Caco-2 (cell line): ENCODE measurements at regions of chr2 and their contacts with region 1.

Region 1: GRCh38 chr2:43484323-43484930 is 111.4 kb downstream of the THADA start:
- DNase-seq: peak in 1 of 2 experiments; percentile 57
- H3K4me3 ChIP-seq: no peak overlapping the region
- H3K4me3 Mint-ChIP-seq: no peak overlapping the region
- H3K27ac Mint-ChIP-seq: no peak overlapping the region
- H3K4me1 ChIP-seq: peaks cover 14% of the 10 kb centered on the region
- H3K4me1 Mint-ChIP-seq: peaks cover 34% of the 10 kb centered on the region
- H3K27me3 ChIP-seq: no peaks in the 10 kb centered on the region
- H3K27me3 Mint-ChIP-seq: no peaks in the 10 kb centered on the region
- CTCF ChIP-seq: peak; percentile 28 to 80

Region 2: DNA sequence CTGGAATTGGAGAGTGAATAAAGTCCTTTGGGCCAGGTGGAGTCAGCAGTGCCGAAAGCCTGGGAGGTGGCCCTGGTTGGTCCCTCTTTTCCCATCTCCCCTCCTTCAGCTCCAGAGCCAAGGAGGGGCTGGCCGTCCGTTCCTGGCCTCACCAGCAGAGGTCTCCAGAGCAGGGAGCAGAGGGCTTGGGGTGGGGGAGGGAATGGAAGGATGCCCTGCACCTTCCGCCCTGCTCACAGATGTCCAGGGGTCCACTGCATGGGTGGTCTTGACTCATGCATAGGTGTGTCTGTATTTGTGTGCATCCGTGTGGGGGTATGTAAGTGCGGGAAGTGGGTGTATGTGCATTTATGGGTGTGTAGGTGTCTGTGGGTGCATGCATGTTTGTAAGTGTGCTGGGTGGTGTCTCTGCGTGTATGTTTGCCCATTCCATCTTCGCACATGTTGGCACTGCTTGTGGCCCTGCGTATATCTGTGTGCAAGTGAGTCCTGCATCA is 459.9 kb before region 1 on chr2:
- CTCF ChIA-PET with region 1: no interaction called
- POLR2A ChIA-PET with region 1: no interaction called
- intact Hi-C with region 1: loop called (anchors 5 kb)
- DNase-seq: peak; percentile 77 to 82
- H3K4me3 ChIP-seq: no peak overlapping the region
- H3K4me3 Mint-ChIP-seq: no peak overlapping the region
- H3K27ac Mint-ChIP-seq: peak overlapping the region; percentile 36
- H3K4me1 ChIP-seq: peaks cover 38% of the 10 kb centered on the region
- H3K4me1 Mint-ChIP-seq: peaks cover 34% of the 10 kb centered on the region
- H3K27me3 ChIP-seq: no peaks in the 10 kb centered on the region
- H3K27me3 Mint-ChIP-seq: no peaks in the 10 kb centered on the region
- CTCF ChIP-seq: peak; percentile 77 to 92

Region 3: DNA sequence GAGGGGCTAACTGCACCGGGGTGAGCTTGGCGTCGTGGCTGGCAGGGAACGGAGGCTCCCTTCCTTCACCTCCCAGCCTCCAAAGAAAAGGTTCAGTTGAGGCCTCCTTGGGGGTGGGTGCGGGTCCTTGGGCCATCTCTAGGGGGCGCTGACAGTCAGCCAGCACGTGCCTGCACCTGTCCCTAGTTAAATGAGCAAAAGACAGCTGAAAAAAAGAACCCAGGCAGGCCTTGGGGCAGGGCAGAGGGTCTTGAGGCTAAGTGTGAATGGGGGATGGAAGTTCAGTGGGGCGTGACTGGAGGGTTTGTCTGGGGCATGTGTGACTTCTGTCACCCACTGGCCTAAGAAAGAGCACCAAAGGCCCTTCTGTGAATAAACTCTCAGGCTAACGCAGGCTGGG is 314.4 kb before region 1 on chr2:
- CTCF ChIA-PET with region 1: no interaction called
- POLR2A ChIA-PET with region 1: no interaction called
- intact Hi-C with region 1: loop called (anchors 10 kb)
- DNase-seq: peak in 1 of 2 experiments; percentile 65
- H3K4me3 ChIP-seq: no peak overlapping the region
- H3K4me3 Mint-ChIP-seq: no peak overlapping the region
- H3K27ac Mint-ChIP-seq: peak overlapping the region; percentile 89
- H3K4me1 ChIP-seq: peaks cover 54% of the 10 kb centered on the region
- H3K4me1 Mint-ChIP-seq: peaks cover 53% of the 10 kb centered on the region
- H3K27me3 ChIP-seq: no peaks in the 10 kb centered on the region
- H3K27me3 Mint-ChIP-seq: no peaks in the 10 kb centered on the region
- CTCF ChIP-seq: peak; percentile 64 to 67

Region 4: DNA sequence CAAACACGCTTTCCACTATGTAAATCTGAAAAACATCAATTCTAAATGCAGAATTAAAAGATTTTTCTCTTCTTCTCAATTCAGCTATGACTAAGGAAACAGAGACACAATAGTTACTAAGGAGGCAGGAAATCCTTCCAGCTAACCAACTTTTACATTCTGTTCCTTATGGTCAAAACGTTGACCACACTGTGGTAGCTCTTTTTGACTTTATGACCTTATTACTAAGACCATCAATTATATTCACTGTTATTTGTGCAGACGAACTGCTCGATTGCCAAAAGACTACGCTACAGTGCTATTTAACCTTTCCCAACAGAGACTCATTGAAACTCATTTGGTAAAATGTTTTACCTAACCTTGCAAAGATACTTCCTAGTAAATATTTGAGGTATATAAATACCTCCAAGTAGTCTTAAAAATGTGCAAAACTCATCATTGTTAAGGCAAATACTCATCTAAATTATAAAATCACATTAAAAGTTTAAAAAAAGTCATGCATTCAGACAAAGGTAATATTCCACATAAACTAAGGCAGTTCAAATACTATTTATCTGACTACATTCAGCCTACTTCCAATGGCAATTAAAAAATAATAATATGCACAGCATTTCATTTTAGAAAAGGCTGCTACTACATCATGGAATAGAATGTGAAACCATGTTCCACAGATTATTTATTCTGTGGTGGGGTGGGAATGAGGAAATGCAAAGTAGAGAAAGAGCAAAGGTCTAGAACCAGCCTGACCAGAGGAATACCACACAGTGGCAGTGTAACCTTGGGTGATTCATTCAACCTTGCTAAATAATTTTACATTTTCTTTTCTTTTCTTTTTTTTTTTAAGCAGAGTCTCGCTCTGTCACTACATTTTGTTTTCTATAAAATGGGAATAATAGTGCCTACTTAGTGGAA is 28.4 kb before region 1 on chr2:
- CTCF ChIA-PET with region 1: interaction called, 4 read pairs
- POLR2A ChIA-PET with region 1: no interaction called
- intact Hi-C with region 1: loop called (anchors 1 kb)
- DNase-seq: peak in 1 of 2 experiments; percentile 63
- H3K4me3 ChIP-seq: no peak overlapping the region
- H3K4me3 Mint-ChIP-seq: no peak overlapping the region
- H3K27ac Mint-ChIP-seq: peak overlapping the region; percentile 36
- H3K4me1 ChIP-seq: peaks cover 57% of the 10 kb centered on the region
- H3K4me1 Mint-ChIP-seq: peaks cover 52% of the 10 kb centered on the region
- H3K27me3 ChIP-seq: no peaks in the 10 kb centered on the region
- H3K27me3 Mint-ChIP-seq: no peaks in the 10 kb centered on the region
- CTCF ChIP-seq: peak in 1 of 2 experiments; percentile 42

Region 5: GRCh38 chr2:43542285-43542937 is 58.0 kb after region 1 on chr2:
- CTCF ChIA-PET with region 1: no interaction called
- POLR2A ChIA-PET with region 1: no interaction called
- intact Hi-C with region 1: loop called (anchors 2 kb)
- DNase-seq: peak in 1 of 2 experiments; percentile 19
- H3K4me3 ChIP-seq: no peak overlapping the region
- H3K4me3 Mint-ChIP-seq: no peak overlapping the region
- H3K27ac Mint-ChIP-seq: no peak overlapping the region
- H3K4me1 ChIP-seq: peaks cover 3% of the 10 kb centered on the region; the same call in 1 of the 2 replicates
- H3K4me1 Mint-ChIP-seq: no peaks in the 10 kb centered on the region
- H3K27me3 ChIP-seq: no peaks in the 10 kb centered on the region
- H3K27me3 Mint-ChIP-seq: no peaks in the 10 kb centered on the region
- CTCF ChIP-seq: peak; percentile 37 to 68

Region 6: DNA sequence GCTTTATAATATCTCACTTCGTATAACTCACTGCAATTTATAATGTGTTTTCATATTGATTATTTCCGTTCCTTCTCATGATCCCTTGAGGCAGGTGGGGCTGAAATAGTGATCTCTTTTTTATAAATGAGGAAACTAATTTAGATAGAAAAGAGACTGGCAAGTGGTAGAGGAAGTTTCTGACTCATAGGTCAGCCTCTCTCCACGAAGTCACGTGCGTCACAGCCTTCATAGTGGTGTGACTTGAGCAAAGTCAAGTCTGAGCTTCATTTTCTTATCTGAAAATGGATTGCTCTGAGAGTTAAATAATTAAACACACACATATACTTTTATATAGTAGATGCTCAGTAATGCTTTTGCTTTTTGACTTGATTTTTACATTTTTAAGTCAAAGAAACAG is 334.3 kb after region 1 on chr2:
- CTCF ChIA-PET with region 1: no interaction called
- POLR2A ChIA-PET with region 1: no interaction called
- intact Hi-C with region 1: no loop called
- DNase-seq: no peak
- H3K4me3 ChIP-seq: no peak overlapping the region
- H3K4me3 Mint-ChIP-seq: no peak overlapping the region
- H3K27ac Mint-ChIP-seq: no peak overlapping the region
- H3K4me1 ChIP-seq: no peaks in the 10 kb centered on the region
- H3K4me1 Mint-ChIP-seq: no peaks in the 10 kb centered on the region
- H3K27me3 ChIP-seq: no peaks in the 10 kb centered on the region
- H3K27me3 Mint-ChIP-seq: peaks cover 12% of the 10 kb centered on the region
- CTCF ChIP-seq: no peak